ENCODE measurements at regions of chr1 and their contacts with region 1.

Region 1: DNA sequence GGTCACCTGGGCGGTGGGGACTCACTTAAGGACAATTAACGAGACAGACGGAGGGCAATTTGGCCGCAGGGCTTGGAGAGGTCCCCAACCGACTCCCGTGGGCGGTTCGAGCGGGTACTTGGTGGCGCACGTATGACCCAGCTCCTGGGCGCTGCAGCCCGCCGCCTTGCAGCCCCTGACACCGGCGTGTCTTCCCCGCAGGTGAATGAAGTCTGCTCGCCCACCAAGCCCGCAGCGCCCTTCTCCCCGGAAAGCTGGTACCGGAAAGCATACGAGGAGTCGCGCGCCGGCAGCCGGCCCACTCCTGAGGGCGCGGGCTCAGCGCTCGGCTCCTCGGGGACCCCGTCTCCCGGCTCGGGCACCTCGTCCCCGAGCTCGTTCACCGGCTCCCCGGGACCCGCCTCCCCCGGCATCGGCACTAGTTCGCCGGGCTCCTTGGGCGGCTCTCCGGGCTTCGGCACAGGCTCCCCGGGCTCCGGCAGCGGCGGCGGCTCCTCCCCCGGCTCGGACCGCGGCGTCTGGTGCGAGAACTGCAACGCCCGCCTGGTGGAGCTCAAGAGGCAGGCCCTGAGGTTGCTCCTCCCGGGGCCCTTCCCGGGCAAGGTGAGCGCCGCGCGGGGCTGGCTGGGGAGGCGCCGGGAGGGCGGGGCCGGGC is 1.4 kb downstream of the KIF26B start:
- DNase-seq: peak; percentile 88
- H3K4me3 ChIP-seq: peak overlapping the region; percentile 42 to 64
- H3K27ac ChIP-seq: no peak overlapping the region
- H3K4me1 ChIP-seq: peaks cover 8% of the 10 kb centered on the region
- H3K27me3 ChIP-seq: no peaks in the 10 kb centered on the region
- CTCF ChIP-seq: peak; percentile 39 to 76 (median 63)
- POLR2A ChIP-seq: no peak

Region 2: GRCh38 chr1:245079021-245079609 is 77.1 kb before region 1 on chr1:
- intact Hi-C with region 1: no loop called
- DNase-seq: no peak
- H3K4me3 ChIP-seq: no peak overlapping the region
- H3K27ac ChIP-seq: no peak overlapping the region
- H3K4me1 ChIP-seq: no peaks in the 10 kb centered on the region
- H3K27me3 ChIP-seq: no peaks in the 10 kb centered on the region
- CTCF ChIP-seq: peak in 1 of 3 experiments; percentile 51
- POLR2A ChIP-seq: no peak

Region 3: DNA sequence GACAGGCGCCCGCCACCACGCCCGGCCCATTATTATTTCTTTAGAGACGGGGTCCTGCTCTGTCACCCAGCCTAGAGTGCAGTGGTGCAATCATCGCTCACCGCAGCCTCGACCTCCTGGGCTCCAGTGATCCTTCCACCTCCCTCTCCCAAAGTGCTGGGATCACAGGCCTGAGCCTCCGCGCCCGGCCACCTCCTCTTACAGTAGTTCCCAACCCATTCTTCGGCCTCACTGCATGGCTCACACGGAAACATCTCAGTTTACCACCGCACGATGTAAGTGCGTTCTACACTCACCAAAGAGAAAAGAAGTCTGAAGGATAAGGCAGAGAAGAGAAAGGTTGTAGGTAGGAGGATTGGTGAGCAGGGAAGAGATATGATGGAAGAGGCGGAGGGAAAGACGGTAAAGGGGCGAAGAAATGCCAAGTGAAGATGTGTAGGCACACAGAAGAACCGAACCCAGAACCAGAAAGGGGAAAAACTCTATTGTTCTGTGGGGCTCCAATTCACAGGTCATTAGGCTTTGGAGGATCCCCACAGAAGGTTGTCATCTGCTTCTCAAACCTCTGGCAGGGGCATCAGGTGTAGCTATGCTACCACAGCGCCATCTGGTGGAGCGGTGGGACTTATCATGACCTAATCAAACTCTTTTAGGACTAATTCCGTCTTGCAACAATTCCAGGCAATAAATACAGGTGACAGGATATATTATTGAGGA is 846.7 kb after region 1 on chr1:
- intact Hi-C with region 1: loop called (anchors 10 kb)
- DNase-seq: peak; percentile 97
- H3K4me3 ChIP-seq: peak overlapping the region; percentile 2 to 15
- H3K27ac ChIP-seq: no peak overlapping the region
- H3K4me1 ChIP-seq: no peaks in the 10 kb centered on the region
- H3K27me3 ChIP-seq: no peaks in the 10 kb centered on the region
- CTCF ChIP-seq: peak; percentile 70 to 87 (median 84)
- POLR2A ChIP-seq: no peak

Region 4: DNA sequence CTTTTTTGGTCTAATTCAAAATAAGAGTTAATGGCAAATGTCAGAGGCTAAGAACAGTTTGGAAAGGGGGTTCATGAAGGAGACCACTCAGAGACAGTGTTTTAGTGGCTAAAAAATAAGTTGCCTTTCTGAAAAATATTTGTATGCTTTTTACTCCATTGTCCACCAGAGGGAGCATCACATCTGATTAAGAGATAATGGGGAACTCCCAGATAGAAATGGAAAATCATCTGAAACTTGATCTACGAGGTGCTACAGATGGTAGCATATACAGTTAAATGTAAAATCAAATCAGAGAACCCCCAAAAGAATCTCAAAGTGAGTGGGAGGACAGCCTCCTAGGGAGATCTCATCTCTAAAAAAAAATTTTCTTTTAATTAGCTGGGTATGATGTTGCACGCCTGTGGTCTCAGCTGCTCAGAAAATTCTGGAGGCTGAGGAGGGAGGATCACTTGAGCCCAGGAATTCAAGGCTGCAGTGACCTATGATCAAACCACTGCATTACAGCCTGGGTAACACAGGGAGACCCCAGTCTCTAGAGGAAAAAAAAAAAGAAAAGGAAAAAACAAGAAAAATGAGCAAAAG is 1341.2 kb after region 1 on chr1:
- intact Hi-C with region 1: loop called (anchors 10 kb)
- DNase-seq: no peak
- H3K4me3 ChIP-seq: no peak overlapping the region
- H3K27ac ChIP-seq: no peak overlapping the region
- H3K4me1 ChIP-seq: no peaks in the 10 kb centered on the region
- H3K27me3 ChIP-seq: no peaks in the 10 kb centered on the region
- CTCF ChIP-seq: peak; percentile 72 to 80 (median 73)
- POLR2A ChIP-seq: no peak